ENCODE measurements at regions of chr17 and their contacts with region 1.

Region 1: GRCh38 chr17:44899069-44899782 is at the start of gene EFTUD2:
- DNase-seq: peak; percentile 92
- H3K4me3 Mint-ChIP-seq: peak within 1 kb of the TSS; percentile 87
- H3K27ac Mint-ChIP-seq: peak within 1 kb of the TSS; percentile 95
- H3K4me1 Mint-ChIP-seq: peaks cover 26% of the 10 kb centered on the region
- H3K27me3 Mint-ChIP-seq: peaks cover 11% of the 10 kb centered on the region
- total RNA-seq, gene EFTUD2: 102 to 114 TPM

Region 2: DNA sequence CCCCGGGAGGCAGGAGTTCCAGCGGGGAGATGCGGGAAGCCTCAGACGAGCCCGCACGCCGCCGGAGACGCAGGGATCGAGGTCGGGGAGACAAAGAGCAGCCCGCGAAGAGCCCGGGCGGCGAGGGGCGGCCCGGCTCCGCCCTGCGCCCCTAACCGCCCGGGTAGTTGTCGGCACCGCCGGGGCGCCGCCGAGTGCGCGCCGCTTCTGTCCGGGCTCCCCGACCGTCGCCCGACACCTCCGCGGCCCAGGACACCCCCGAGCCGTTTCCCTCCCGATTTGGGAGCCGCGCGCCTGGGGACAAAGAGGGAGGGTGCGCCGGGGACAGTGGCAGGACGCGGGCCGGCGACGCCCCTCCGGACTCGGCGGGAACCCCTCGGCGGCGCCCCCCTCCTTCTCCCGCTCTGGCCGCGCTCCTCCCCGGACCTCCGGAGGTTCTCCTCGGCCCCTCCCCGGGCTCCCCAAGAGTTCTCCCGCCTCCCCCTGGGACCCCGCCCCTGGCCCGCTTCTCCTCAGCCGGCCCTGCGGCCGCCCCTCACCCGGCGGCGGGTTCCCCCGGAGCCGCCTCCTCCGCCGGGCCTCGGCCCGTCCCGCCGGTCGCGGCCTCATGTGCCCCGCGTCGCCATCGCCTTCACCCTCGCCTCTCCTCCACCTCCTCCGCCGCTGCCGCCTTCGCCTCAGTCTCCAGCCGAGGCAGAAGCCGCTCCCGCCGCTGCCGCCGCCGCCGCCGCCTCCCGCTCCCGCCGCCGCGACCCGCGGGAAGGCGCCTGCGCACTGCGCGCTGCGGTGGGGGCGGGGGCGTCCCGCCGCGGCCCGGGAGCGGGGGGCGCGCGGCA is 69.5 kb before region 1 on chr17 and contains the start of gene GJC1:
- CTCF ChIA-PET with region 1: no interaction called
- POLR2A ChIA-PET with region 1: no interaction called
- DNase-seq: no peak
- H3K4me3 Mint-ChIP-seq: peak within 1 kb of the TSS; percentile 62
- H3K27ac Mint-ChIP-seq: no peak within 1 kb of the TSS
- H3K4me1 Mint-ChIP-seq: peaks cover 10% of the 10 kb centered on the region
- H3K27me3 Mint-ChIP-seq: peaks cover 59% of the 10 kb centered on the region
- total RNA-seq, gene GJC1: 0.78 to 0.88 TPM

Region 3: DNA sequence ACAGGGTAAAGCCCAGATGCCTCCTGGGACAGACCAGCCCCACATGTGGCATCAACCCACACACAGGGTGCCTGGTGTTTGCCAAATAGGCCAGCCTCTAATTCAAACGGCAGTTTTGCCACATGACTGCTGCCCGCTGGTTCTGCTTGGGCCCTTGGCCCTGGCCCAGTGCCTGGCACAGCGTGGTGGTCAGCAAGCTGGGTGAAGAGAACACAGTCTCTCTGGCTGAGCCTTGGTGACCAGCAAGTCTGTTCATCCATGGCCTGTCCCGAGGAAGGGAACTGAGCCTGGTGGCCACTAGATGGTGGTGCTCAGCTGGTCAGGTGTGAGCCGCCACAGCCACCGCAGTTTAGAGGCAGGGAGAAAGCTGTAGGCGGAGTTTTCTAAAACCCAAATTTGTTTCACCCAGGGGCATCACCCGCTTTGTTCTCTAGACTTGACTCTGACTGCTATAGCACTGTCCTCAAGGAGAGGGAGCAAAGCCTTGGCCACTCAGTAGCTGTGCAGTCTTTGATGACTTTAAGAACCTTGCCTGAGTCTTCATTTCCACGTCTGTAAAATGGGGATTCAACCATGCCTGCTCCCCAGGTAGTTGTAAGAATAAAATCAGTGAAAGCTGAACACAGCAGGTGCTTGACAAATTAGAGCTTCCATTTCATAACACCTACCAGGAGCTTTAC is 20.8 kb after region 1 on chr17:
- CTCF ChIA-PET with region 1: interaction called, 3 read pairs
- POLR2A ChIA-PET with region 1: interaction called, 10 read pairs
- DNase-seq: peak; percentile 69
- H3K4me3 Mint-ChIP-seq: no peak overlapping the region
- H3K27ac Mint-ChIP-seq: no peak overlapping the region
- H3K4me1 Mint-ChIP-seq: no peaks in the 10 kb centered on the region
- H3K27me3 Mint-ChIP-seq: peaks cover 26% of the 10 kb centered on the region

Region 4: DNA sequence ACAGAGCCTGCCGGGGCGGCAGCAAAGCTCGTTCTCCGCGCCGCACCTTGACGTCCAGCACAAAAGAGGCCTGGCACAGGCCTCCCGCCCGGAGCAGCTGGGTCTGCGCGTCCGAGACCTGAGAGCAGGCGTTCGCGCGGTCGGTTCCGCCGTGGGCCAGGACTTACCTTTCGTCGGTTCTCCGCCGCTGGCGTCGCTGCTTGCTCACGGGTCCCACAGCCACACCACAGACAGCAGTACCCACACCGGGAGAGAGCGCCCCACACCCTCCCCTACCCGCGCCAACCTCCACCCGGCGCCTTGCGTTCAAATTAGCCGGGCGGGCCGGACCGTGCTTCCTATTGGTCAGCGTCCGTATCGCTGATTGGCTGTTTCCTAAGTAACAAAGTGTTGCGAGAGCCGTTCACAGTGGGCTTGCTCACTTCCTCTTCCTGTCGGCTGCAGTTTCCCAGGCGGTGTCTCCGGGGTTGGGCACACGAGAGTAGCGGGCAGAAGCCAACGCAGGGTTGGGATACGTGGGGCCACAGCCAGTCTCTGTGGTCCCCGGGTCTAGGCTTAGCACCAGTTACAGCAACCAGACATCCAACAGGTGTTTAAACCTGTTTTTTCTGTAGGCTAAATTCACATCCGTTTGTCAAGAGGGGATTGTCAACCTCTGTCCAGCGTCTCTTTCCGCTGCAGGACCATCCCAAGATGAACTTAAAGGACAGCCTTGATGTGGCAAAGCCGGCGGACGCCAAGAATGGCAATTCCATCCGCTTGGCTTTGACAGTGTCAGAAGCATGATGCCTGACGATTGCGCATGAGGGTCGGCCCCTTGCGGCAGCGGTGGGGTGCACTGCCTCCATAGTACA is 48.5 kb after region 1 on chr17 and contains the start of gene KIF18B:
- CTCF ChIA-PET with region 1: no interaction called
- POLR2A ChIA-PET with region 1: interaction called, 14 read pairs
- DNase-seq: peak; percentile 95
- H3K4me3 Mint-ChIP-seq: peak within 1 kb of the TSS; percentile 96
- H3K27ac Mint-ChIP-seq: peak within 1 kb of the TSS; percentile 88
- H3K4me1 Mint-ChIP-seq: peaks cover 46% of the 10 kb centered on the region
- H3K27me3 Mint-ChIP-seq: no peaks in the 10 kb centered on the region
- total RNA-seq, gene KIF18B: 66.9 to 67.9 TPM

Region 5: GRCh38 chr17:45051060-45051719 is 152.0 kb after region 1 on chr17 and contains the start of gene DCAKD:
- CTCF ChIA-PET with region 1: no interaction called
- POLR2A ChIA-PET with region 1: interaction called, 10 read pairs
- DNase-seq: peak; percentile 95
- H3K4me3 Mint-ChIP-seq: peak within 1 kb of the TSS; percentile 96
- H3K27ac Mint-ChIP-seq: peak within 1 kb of the TSS; percentile 98
- H3K4me1 Mint-ChIP-seq: peaks cover 49% of the 10 kb centered on the region
- H3K27me3 Mint-ChIP-seq: no peaks in the 10 kb centered on the region
- total RNA-seq, gene DCAKD: 25.9 to 26.2 TPM

Region 6: DNA sequence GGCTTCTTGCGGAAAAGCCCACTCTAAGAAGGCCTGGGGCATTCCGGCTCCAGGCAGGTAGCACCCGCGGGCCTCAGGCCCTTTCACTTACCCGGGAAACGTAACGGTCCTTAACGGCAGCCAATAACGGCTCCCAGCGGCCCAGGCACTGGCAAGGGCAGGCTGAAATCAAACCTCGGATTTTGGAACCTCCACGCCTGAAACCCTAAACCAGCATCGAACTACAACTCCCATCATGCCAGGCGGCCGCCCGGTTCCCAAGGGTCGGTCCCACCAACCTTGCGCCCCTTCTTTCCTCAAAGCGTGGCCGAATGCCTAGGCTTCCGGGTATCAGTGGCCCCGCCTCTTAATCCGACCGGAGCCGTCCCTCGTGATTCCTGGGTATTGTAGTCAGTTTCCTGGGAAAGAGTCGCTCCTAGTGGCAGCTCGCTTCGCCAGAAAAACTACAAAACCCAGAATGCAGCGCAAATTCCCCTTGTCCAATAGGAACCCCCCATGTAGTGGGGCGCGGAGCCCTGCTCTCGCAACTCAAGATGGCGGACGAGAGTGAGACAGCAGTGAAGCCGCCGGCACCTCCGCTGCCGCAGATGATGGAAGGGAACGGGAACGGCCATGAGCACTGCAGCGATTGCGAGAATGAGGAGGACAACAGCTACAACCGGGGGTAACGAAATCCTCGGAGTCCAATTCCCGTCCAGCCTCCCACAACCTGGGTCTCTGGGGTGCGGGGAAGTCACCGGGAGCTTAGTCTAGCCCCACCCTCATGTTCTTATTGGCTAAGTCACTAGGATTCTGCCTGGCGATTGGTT is 161.8 kb after region 1 on chr17 and contains the start of gene NMT1:
- CTCF ChIA-PET with region 1: no interaction called
- POLR2A ChIA-PET with region 1: interaction called, 15 read pairs
- DNase-seq: peak; percentile 98
- H3K4me3 Mint-ChIP-seq: peak within 1 kb of the TSS; percentile 89
- H3K27ac Mint-ChIP-seq: peak within 1 kb of the TSS; percentile 96
- H3K4me1 Mint-ChIP-seq: peaks cover 42% of the 10 kb centered on the region
- H3K27me3 Mint-ChIP-seq: no peaks in the 10 kb centered on the region
- total RNA-seq, gene NMT1: 114 TPM